Motor neuron (in vitro differentiated cells): ENCODE measurements at regions of chr9 and their contacts with region 1.

Region 1: DNA sequence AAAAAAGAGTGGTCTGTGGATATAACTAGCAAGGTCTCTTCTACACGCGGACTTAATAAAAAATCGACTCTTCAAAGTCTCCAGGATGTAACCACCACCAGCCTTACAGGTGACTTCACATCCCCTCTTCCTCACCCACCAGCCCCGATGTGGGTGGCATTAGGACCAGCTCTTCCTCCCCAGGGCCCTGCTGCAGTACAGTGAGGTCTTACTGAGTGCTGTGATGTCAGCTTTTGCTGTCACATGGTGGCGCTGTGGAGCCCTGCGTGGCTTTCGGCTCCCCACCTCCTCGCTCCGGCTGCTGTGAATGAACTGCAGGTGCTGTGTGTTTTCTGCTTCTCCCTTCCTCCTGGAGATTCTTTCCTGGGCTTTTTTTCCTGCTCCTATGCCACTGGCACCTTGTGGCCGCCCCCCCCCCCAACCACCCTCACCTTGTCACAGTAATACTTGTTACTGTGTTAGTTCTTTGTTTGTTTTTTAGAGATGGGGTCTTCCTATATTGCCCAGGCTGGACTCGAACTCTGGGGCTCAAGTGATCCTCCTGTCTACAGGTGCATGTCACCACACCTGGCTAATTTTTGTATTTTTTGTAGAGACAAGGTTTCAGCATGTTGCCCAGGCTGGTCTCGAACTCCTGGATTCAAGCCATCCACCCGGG is 15.8 kb upstream of the RAPGEF1 start:
- ATAC-seq: peak; percentile 98 to 100 (median 99)
- H3K4me3 ChIP-seq: no peak overlapping the region
- H3K27ac ChIP-seq: no peak overlapping the region
- H3K4me1 ChIP-seq: no peaks in the 10 kb centered on the region

Region 2: DNA sequence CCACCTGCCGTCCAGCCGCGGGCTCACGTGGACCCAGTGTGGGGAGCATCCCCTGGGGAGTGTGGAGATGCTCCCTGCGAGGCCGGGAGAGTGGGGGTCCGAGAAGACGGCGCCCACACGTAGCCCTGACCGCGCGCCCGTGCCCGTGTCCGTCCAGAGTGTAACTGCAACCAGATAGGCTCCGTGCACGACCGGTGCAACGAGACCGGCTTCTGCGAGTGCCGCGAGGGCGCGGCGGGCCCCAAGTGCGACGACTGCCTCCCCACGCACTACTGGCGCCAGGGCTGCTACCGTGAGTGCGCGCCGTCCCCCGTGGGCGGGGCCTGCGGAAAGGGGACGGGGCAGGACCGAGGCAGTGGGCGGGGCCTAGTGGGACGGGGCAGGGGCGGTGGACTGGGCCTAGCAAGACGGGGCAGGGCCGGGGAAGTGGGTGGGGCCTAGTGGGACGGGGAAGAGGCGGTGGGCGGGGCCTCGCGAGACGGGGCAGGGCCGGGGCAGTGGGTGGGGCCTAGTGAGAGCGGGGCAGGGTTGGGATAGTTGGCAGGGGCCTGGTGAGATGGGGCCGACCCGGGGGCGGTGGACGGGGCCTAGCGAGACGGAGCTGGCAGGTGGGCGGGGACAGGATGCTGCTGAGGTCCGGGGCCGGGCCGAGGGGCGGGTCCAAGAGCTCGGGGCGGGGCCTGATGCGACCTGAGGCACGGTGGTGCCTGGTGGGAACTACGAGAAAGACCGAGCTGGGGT is 485.3 kb after region 1 on chr9:
- in situ Hi-C with region 1: loop called in 2 of 9 experiments (anchors 25 kb)
- ATAC-seq: peak; percentile 76 to 91 (median 80)
- H3K4me3 ChIP-seq: peak overlapping the region; percentile 22 to 41 (median 33)
- H3K27ac ChIP-seq: peak overlapping the region in 1 of 2 donors; percentile 7
- H3K4me1 ChIP-seq: peaks cover 37 to 43% of the 10 kb centered on the region in 2 donors

Region 3: DNA sequence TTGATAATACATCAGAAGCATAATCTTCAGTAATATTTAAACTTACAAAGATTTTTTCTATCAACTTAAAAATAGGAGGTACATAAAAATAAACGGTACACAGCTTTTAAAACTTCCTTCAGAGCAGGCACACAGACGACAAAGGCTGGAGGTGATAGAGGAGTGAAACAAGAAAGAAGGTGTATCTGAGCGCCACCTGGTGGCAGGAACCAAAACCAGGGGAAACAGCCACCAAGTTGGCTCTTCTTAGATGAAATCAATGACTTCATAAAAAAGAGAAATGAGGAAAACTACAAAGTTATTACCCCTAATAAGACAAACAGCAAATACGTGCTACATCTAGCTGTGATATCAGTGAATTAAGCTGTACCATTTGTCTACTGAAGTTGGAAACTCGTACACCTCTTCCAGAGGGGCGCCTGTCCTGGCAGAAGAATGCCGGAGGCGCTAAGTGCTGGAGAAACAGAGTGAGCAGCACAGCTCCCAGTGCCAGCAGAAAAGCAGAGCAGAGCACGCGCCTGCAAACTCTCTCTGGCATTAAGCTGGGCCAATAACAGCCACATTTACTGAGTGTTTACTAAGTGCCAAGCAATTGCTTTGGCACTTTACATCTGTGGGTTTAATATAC is 513.2 kb after region 1 on chr9:
- in situ Hi-C with region 1: loop called in 3 of 9 experiments (anchors 5 to 25 kb)
- ATAC-seq: peak; percentile 26 to 84 (median 64)
- H3K4me3 ChIP-seq: no peak overlapping the region
- H3K27ac ChIP-seq: no peak overlapping the region
- H3K4me1 ChIP-seq: no peaks in the 10 kb centered on the region